Right ventricle myocardium superior (tissue), 1 donor: ENCODE measurements at regions of chr2 and their contacts with region 1.

Region 1: GRCh38 chr2:40451918-40452605 is at the start of gene SLC8A1:
- DNase-seq: peak; percentile 63
- ATAC-seq: peak; percentile 46
- total RNA-seq, gene SLC8A1: 958 TPM

Region 2: GRCh38 chr2:40546439-40547191 is 94.6 kb after region 1 on chr2:
- intact Hi-C with region 1: loop called (anchors 10 kb)
- DNase-seq: no peak
- ATAC-seq: no peak

Region 3: GRCh38 chr2:40859617-40860016 is 407.6 kb after region 1 on chr2:
- intact Hi-C with region 1: no loop called
- DNase-seq: no peak
- ATAC-seq: no peak